Activated T-helper 2 cell treated with anti-CD3 and anti-CD28 coated beads, Interferon-gamma antibody, Interleukin-2, Interleukin-4, amounts not matched to agents 10 μg/mL and 5 μg/mL and 100 μg/mL, durations not matched to agents 14 hours and 24 hours and 36 hours (primary cell): ENCODE measurements at regions of chr7 and their contacts with region 1.

Region 1: DNA sequence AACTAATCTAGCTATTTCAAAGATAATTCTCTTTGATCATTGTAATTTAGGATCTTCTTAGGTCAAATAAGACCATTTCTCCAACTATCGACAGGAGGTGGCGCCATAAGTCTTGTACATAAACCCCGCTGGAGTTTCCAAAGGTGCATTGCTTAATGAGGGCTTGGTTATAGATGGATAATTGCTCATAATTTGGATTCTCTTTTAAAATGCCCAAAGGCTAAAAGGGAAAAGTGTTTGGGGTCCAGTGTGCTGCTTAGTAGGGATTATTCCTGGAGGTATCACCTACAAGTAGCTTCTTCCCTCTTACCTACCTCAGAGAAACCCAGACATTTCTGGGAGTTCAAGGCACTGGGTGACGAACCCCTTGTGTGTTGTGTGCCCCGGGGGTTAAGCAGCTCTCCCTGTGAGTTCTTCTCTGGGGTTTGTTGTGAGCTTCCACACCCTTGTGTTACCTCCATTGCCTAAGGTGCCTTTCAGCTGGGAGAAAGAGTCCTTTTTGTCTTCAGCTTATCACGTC is 75.2 kb downstream of the PAXIP1 start:
- DNase-seq: peak; percentile 59
- H3K4me3 Mint-ChIP-seq: peak overlapping the region; percentile 87
- H3K27ac Mint-ChIP-seq: peak overlapping the region; percentile 94
- H3K4me1 Mint-ChIP-seq: peaks cover 22% of the 10 kb centered on the region
- H3K27me3 Mint-ChIP-seq: peaks cover 18% of the 10 kb centered on the region

Region 2: GRCh38 chr7:155003376-155004214 is 75.9 kb after region 1 on chr7:
- intact Hi-C with region 1: loop called (anchors 1 kb)
- DNase-seq: peak; percentile 77
- H3K4me3 Mint-ChIP-seq: peak overlapping the region; percentile 93
- H3K27ac Mint-ChIP-seq: peak overlapping the region; percentile 92
- H3K4me1 Mint-ChIP-seq: peaks cover 13% of the 10 kb centered on the region
- H3K27me3 Mint-ChIP-seq: no peaks in the 10 kb centered on the region

Region 3: GRCh38 chr7:155283565-155284194 is 356.0 kb after region 1 on chr7:
- intact Hi-C with region 1: loop called (anchors 5 kb)
- DNase-seq: no peak
- H3K4me3 Mint-ChIP-seq: no peak overlapping the region
- H3K27ac Mint-ChIP-seq: peak overlapping the region; percentile 51
- H3K4me1 Mint-ChIP-seq: peaks cover 86% of the 10 kb centered on the region
- H3K27me3 Mint-ChIP-seq: no peaks in the 10 kb centered on the region

Region 4: DNA sequence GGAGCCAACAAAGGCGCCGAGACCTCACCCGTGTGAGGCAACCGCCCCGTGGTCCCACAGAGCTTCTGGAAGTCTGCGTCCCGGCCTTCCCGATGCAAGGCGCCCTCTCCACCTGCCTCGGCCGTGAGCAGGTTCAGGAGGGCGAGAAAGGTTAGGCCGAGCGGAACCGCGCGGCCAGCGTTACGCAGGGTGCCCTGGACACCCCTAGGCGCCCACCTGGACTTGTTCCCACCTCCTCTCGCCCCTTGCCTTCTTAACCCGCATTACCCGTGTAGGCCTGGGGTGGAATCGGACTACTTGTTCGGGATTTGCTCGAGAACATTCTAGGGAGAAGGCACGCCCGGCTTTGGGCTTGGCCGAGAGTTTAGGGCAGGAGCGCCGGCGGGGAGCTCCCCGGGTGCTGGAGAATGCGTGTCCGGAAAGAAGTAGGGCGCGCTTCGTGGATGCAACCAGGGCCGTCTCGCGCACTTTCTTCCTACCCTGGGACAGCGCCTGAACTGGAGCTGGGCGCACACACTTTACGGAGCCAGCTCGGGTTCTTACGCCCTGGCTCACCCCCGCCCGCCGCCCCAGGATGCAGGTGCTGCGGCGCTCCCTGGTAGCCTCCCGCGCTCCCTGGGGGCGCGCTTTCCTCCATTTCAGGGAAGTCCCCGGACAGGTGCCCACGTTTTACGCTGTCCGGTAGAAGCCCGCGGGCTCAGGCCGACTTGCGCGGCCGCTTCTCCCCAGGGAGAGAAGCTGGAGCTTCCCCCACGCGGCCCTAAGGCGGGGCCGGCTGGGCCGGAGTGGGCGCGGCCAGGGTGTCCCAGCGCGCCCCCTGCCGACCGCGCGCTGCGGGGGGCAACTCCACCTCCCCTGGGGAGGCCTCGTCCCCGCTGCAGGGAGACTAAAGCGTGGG is 444.4 kb after region 1 on chr7:
- intact Hi-C with region 1: loop called (anchors 1 kb)
- DNase-seq: no peak
- H3K4me3 Mint-ChIP-seq: no peak overlapping the region
- H3K27ac Mint-ChIP-seq: no peak overlapping the region
- H3K4me1 Mint-ChIP-seq: peaks cover 23% of the 10 kb centered on the region
- H3K27me3 Mint-ChIP-seq: peaks cover 65% of the 10 kb centered on the region